ENCODE measurements at regions of chr22 and their contacts with region 1.

Region 1: DNA sequence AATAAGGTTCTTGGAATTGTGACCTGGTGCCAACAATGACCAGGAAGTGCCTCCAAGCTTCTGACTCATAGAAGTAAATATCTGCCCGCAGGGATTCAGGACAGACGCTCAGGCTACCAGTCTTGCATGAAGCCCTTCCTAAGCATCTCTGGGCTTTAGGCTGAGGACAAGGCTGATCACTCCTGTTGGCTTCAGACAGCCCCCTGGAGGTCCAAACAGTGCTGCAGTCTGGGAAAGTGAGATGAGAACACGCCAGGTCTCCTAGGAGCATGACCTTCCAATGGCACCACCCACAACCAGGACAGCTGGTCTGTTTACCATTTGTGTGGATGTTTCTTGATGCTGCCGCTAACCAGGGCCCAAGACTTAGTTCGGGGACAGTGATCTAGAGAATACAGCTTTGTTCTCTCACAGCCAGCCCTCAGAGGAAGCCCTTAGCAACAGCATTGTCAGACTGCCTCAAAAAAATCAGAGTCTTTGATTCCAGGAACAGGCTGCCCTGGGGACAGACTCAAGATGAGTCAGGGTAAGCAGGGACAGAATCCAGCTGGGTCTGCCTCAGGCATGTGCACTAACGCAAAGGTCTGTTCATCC is 111.2 kb downstream of the ZNF280B start:
- DNase-seq: peak; percentile 37 to 58 (median 49)
- ATAC-seq: peak; percentile 78
- H3K4me3 ChIP-seq: no peak overlapping the region
- H3K27ac ChIP-seq: no peak overlapping the region
- H3K4me1 ChIP-seq: no peaks in the 10 kb centered on the region
- H3K27me3 ChIP-seq: peaks cover 0 to 31% of the 10 kb centered on the region in 2 experiments; a peak in 3 of 5 replicates
- CTCF ChIP-seq: peak; percentile 62 to 65 (median 63)
- EP300 ChIP-seq: no peak
- POLR2A ChIP-seq: no peak
- RAD21 ChIP-seq: peak in 1 of 2 experiments; percentile 46; a peak in 2 of 4 replicates

Region 2: GRCh38 chr22:22386602-22387385 is 10.6 kb before region 1 on chr22:
- CTCF ChIA-PET with region 1: no interaction called
- POLR2A ChIA-PET with region 1: interaction called, 21 read pairs
- in situ Hi-C with region 1: no loop called
- intact Hi-C with region 1: no loop called
- DNase-seq: no peak
- ATAC-seq: no peak
- H3K4me3 ChIP-seq: no peak overlapping the region
- H3K27ac ChIP-seq: no peak overlapping the region
- H3K4me1 ChIP-seq: no peaks in the 10 kb centered on the region
- H3K27me3 ChIP-seq: peaks cover 31 to 44% of the 10 kb centered on the region in 2 experiments
- CTCF ChIP-seq: no peak
- EP300 ChIP-seq: no peak
- POLR2A ChIP-seq: no peak
- RAD21 ChIP-seq: no peak